ENCODE measurements at regions of chr7 and their contacts with region 1.

Region 1: GRCh38 chr7:155344600-155345433 is 47.1 kb downstream of the INSIG1 start:
- DNase-seq: peak; percentile 65 to 93 (median 82)
- ATAC-seq: peak; percentile 99
- H3K4me3 ChIP-seq: peak overlapping the region; percentile 35
- H3K4me3 Mint-ChIP-seq: peak overlapping the region in 9 of 10 donors; percentile 47 to 83 (median 69)
- H3K27ac ChIP-seq: no peak overlapping the region
- H3K27ac Mint-ChIP-seq: peak overlapping the region in 1 of 9 donors; percentile 52
- H3K4me1 ChIP-seq: peaks cover 4 to 9% of the 10 kb centered on the region in 2 donors
- H3K4me1 Mint-ChIP-seq: peaks cover 3 to 12% (median 5%) of the 10 kb centered on the region in 7 donors
- H3K27me3 ChIP-seq: peaks cover 0 to 2% of the 10 kb centered on the region in 2 donors
- H3K27me3 Mint-ChIP-seq: peaks cover 0 to 34% (median 7%) of the 10 kb centered on the region in 5 donors

Region 2: GRCh38 chr7:155003376-155004214 is 341.2 kb before region 1 on chr7:
- CTCF ChIA-PET with region 1: no interaction called
- POLR2A ChIA-PET with region 1: no interaction called
- intact Hi-C with region 1: loop called (anchors 2 kb)
- DNase-seq: peak in 8 of 9 donors; percentile 74 to 93 (median 86)
- ATAC-seq: peak; percentile 93
- H3K4me3 ChIP-seq: peak overlapping the region; percentile 68
- H3K4me3 Mint-ChIP-seq: peak overlapping the region; percentile 91 to 98 (median 94)
- H3K27ac ChIP-seq: peak overlapping the region; percentile 93
- H3K27ac Mint-ChIP-seq: peak overlapping the region; percentile 89 to 96 (median 94)
- H3K4me1 ChIP-seq: peaks cover 0 to 6% of the 10 kb centered on the region in 2 donors
- H3K4me1 Mint-ChIP-seq: peaks cover 12 to 25% (median 16%) of the 10 kb centered on the region in 7 donors
- H3K27me3 ChIP-seq: no peaks in the 10 kb centered on the region
- H3K27me3 Mint-ChIP-seq: no peaks in the 10 kb centered on the region

Region 3: DNA sequence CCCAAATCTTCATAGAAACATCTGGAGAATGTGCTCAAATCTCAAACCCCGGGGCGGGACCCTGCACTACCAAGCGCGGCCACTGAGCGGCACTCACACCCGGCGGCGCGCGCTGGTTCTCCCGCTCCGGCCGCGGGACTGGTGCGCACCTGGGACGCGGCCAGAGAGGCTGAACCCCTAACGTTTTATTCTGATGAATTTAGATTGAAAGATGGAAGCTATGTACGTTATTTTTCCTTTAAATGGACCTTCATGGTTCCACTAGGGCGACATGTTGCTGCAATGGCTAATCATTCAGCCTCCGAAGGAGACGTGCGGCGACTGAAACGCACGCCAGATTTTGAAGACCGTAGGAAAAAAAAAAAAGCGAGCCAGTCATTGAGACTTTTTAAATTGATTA is 154.1 kb before region 1 on chr7:
- CTCF ChIA-PET with region 1: interaction called, 28 read pairs
- POLR2A ChIA-PET with region 1: no interaction called
- intact Hi-C with region 1: loop called (anchors 1 kb)
- DNase-seq: peak in 7 of 9 donors; percentile 28 to 76 (median 48)
- ATAC-seq: peak; percentile 83
- H3K4me3 ChIP-seq: no peak overlapping the region
- H3K4me3 Mint-ChIP-seq: peak overlapping the region in 4 of 10 donors; percentile 32 to 59 (median 48)
- H3K27ac ChIP-seq: no peak overlapping the region
- H3K27ac Mint-ChIP-seq: no peak overlapping the region
- H3K4me1 ChIP-seq: no peaks in the 10 kb centered on the region
- H3K4me1 Mint-ChIP-seq: peaks cover 0 to 17% (median 3%) of the 10 kb centered on the region in 7 donors
- H3K27me3 ChIP-seq: no peaks in the 10 kb centered on the region
- H3K27me3 Mint-ChIP-seq: peaks cover 2 to 17% (median 8%) of the 10 kb centered on the region in 5 donors

Region 4: GRCh38 chr7:155234158-155234492 is 110.7 kb before region 1 on chr7:
- CTCF ChIA-PET with region 1: interaction called, 8 read pairs
- POLR2A ChIA-PET with region 1: no interaction called
- intact Hi-C with region 1: loop called in 1 of 2 experiments (anchors 1 kb)
- DNase-seq: peak in 3 of 9 donors; percentile 5 to 8 (median 6)
- ATAC-seq: no peak
- H3K4me3 ChIP-seq: no peak overlapping the region
- H3K4me3 Mint-ChIP-seq: no peak overlapping the region
- H3K27ac ChIP-seq: no peak overlapping the region
- H3K27ac Mint-ChIP-seq: no peak overlapping the region
- H3K4me1 ChIP-seq: no peaks in the 10 kb centered on the region
- H3K4me1 Mint-ChIP-seq: peaks cover 0 to 9% (median 0%) of the 10 kb centered on the region in 7 donors
- H3K27me3 ChIP-seq: no peaks in the 10 kb centered on the region
- H3K27me3 Mint-ChIP-seq: peaks cover 3 to 26% (median 9%) of the 10 kb centered on the region in 5 donors

Region 5: GRCh38 chr7:155576900-155577508 is 232.2 kb after region 1 on chr7:
- CTCF ChIA-PET with region 1: no interaction called
- POLR2A ChIA-PET with region 1: no interaction called
- intact Hi-C with region 1: no loop called
- DNase-seq: no peak
- ATAC-seq: no peak
- H3K4me3 ChIP-seq: no peak overlapping the region
- H3K4me3 Mint-ChIP-seq: no peak overlapping the region
- H3K27ac ChIP-seq: no peak overlapping the region
- H3K27ac Mint-ChIP-seq: no peak overlapping the region
- H3K4me1 ChIP-seq: no peaks in the 10 kb centered on the region
- H3K4me1 Mint-ChIP-seq: no peaks in the 10 kb centered on the region
- H3K27me3 ChIP-seq: no peaks in the 10 kb centered on the region
- H3K27me3 Mint-ChIP-seq: peaks cover 0 to 11% (median 2%) of the 10 kb centered on the region in 5 donors

Region 6: DNA sequence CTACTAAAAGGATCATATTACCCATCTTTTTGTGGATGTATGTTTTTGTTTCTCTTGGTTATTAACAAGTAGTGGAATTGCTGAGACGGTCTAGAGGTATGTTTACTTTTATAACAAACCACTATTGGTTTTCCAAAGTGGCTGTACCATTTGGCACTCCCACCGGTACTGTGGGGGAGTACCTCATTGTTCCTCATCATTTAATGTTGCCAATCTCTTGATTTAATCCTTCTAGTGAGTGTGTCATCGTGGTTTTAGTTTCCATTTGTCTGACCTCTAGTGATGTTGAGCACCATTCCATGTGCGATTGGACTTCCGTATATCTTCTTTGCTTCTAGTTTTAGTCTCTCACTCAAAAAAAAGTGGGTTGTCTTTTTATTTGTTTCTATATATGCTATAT is 350.0 kb after region 1 on chr7:
- CTCF ChIA-PET with region 1: no interaction called
- POLR2A ChIA-PET with region 1: no interaction called
- intact Hi-C with region 1: no loop called
- DNase-seq: no peak
- ATAC-seq: no peak
- H3K4me3 ChIP-seq: no peak overlapping the region
- H3K4me3 Mint-ChIP-seq: peak overlapping the region in 1 of 10 donors; percentile 26
- H3K27ac ChIP-seq: no peak overlapping the region
- H3K27ac Mint-ChIP-seq: peak overlapping the region in 3 of 9 donors; percentile 29 to 57 (median 34)
- H3K4me1 ChIP-seq: peaks cover 4 to 8% of the 10 kb centered on the region in 2 donors
- H3K4me1 Mint-ChIP-seq: peaks cover 43 to 94% (median 90%) of the 10 kb centered on the region in 7 donors
- H3K27me3 ChIP-seq: no peaks in the 10 kb centered on the region
- H3K27me3 Mint-ChIP-seq: no peaks in the 10 kb centered on the region

Region 7: GRCh38 chr7:155744971-155745683 is 400.3 kb after region 1 on chr7:
- CTCF ChIA-PET with region 1: no interaction called
- POLR2A ChIA-PET with region 1: no interaction called
- intact Hi-C with region 1: no loop called
- DNase-seq: no peak
- ATAC-seq: no peak
- H3K4me3 ChIP-seq: no peak overlapping the region
- H3K4me3 Mint-ChIP-seq: no peak overlapping the region
- H3K27ac ChIP-seq: no peak overlapping the region
- H3K27ac Mint-ChIP-seq: peak overlapping the region in 6 of 9 donors; percentile 5 to 66 (median 36)
- H3K4me1 ChIP-seq: no peaks in the 10 kb centered on the region
- H3K4me1 Mint-ChIP-seq: peaks cover 31 to 68% (median 53%) of the 10 kb centered on the region in 7 donors
- H3K27me3 ChIP-seq: no peaks in the 10 kb centered on the region
- H3K27me3 Mint-ChIP-seq: no peaks in the 10 kb centered on the region

Region 8: DNA sequence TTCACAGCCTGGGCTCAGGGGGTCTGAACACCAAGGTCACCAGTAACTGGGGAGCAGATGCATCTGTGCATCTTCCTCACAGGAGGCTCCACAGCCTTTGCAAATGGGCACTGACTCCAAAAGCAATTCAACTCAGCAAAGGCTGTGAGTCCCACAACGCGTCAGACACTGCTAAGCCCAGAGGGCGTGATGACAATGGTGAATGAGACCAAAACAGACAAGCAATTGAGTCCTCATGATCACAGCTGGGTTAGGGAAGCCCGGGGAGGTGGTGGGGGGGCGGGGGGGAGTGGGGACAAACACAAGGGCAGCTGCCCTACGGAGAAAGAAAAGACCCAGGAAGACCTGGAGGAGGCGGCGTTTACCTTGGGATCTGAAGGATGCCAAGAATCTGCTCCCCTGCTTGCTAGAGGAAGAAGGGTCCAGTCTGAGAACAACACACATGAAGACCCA is 1234.2 kb after region 1 on chr7:
- CTCF ChIA-PET with region 1: no interaction called
- POLR2A ChIA-PET with region 1: no interaction called
- intact Hi-C with region 1: no loop called
- DNase-seq: no peak
- ATAC-seq: no peak
- H3K4me3 ChIP-seq: no peak overlapping the region
- H3K4me3 Mint-ChIP-seq: no peak overlapping the region
- H3K27ac ChIP-seq: no peak overlapping the region
- H3K27ac Mint-ChIP-seq: no peak overlapping the region
- H3K4me1 ChIP-seq: no peaks in the 10 kb centered on the region
- H3K4me1 Mint-ChIP-seq: peaks cover 0 to 20% (median 0%) of the 10 kb centered on the region in 7 donors
- H3K27me3 ChIP-seq: no peaks in the 10 kb centered on the region
- H3K27me3 Mint-ChIP-seq: peaks cover 26 to 45% (median 33%) of the 10 kb centered on the region in 5 donors